Prostate gland (tissue), 2 donors: ENCODE measurements at regions of chr6 and their contacts with region 1.

Region 1: DNA sequence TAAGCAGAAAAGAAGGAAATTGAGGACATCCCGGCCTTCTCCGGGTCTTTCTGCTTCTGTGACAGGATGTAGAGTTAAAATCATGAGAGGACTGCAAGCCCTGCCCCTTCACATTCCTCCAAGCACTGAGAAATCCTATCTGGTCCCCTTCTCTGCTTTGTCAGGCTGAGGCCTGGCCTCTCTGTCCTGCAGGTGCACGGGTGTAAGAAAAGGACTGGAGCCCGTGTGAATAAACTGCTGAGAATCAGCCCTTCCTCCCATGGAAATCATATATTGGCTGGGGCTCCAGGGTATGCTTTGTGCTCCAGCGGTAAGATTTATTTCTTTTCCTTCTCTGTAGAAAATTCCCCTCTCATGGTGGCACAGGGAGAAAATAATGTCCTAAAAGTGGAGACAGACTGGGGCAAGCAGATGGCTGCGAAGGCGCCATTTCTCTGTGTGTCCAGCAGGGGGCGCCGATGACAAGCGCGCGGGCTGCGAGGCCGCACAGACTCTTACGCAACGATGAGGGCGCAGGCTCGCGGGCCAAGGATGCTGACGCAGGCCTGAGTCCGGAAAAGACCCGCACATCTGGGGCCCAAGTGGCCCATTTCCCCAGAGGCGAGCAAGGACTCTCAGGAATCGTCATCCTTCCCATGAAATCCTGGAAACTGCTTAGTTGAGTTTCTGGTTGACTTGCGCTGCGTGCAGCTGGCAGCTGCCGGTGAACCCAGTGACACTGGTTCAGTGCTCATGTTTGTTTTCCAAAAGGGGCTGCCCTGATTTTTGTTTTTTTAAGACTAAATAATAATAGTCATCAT is 258.6 kb downstream of the ADGB start:
- DNase-seq: peak; percentile 71
- H3K4me3 ChIP-seq: peak overlapping the region in 1 of 2 donors; percentile 14
- H3K27ac ChIP-seq: peak overlapping the region in 1 of 2 donors; percentile 18
- H3K4me1 ChIP-seq: no peaks in the 10 kb centered on the region
- H3K27me3 ChIP-seq: no peaks in the 10 kb centered on the region
- CTCF ChIP-seq: peak; percentile 95 to 99 (median 96)
- POLR2A ChIP-seq: no peak

Region 2: DNA sequence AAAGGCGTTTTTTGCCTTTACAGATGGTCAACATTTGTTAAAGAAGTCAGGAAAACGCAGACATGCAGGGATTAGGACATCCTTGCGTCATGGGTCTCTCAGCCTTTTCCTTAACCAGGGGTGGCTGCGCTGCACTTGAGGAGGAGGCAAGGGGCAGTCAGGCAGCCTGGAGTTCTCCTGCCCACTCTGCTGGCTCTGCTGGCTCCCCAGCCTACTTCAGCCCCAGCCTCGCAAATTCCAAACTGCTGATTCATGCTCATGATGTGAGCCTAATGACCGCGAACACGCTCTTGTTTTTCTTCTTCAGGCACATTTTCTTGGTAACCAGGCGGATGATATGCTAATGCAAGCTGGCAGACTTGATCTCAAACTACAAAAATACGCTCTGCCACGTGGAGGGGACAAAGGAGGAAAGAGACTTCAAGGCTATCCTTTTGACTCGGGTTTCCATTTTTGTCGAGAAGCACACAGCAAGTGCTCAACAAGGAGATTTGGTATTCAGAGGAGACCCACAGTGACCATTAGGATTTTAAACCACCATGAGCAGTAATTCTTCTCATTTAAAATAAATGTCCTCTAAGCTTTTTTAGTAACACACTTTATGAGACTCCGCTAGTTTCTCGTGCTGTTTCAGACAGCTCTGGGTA is 56.6 kb after region 1 on chr6:
- intact Hi-C with region 1: loop called (anchors 5 kb)
- DNase-seq: peak; percentile 24
- H3K4me3 ChIP-seq: no peak overlapping the region
- H3K27ac ChIP-seq: no peak overlapping the region
- H3K4me1 ChIP-seq: no peaks in the 10 kb centered on the region
- H3K27me3 ChIP-seq: no peaks in the 10 kb centered on the region
- CTCF ChIP-seq: no peak
- POLR2A ChIP-seq: no peak

Region 3: GRCh38 chr6:147202516-147203312 is 345.3 kb after region 1 on chr6:
- intact Hi-C with region 1: loop called (anchors 5 kb)
- DNase-seq: peak; percentile 94
- H3K4me3 ChIP-seq: peak overlapping the region; percentile 82 to 90
- H3K27ac ChIP-seq: peak overlapping the region; percentile 94 to 95
- H3K4me1 ChIP-seq: no peaks in the 10 kb centered on the region
- H3K27me3 ChIP-seq: no peaks in the 10 kb centered on the region
- CTCF ChIP-seq: no peak
- POLR2A ChIP-seq: peak; percentile 83

Region 4: GRCh38 chr6:147222160-147222838 is 364.9 kb after region 1 on chr6:
- intact Hi-C with region 1: loop called (anchors 5 kb)
- DNase-seq: no peak
- H3K4me3 ChIP-seq: no peak overlapping the region
- H3K27ac ChIP-seq: no peak overlapping the region
- H3K4me1 ChIP-seq: no peaks in the 10 kb centered on the region
- H3K27me3 ChIP-seq: no peaks in the 10 kb centered on the region
- CTCF ChIP-seq: peak in 3 of 4 experiments; percentile 13 to 44 (median 28)
- POLR2A ChIP-seq: no peak

Region 5: DNA sequence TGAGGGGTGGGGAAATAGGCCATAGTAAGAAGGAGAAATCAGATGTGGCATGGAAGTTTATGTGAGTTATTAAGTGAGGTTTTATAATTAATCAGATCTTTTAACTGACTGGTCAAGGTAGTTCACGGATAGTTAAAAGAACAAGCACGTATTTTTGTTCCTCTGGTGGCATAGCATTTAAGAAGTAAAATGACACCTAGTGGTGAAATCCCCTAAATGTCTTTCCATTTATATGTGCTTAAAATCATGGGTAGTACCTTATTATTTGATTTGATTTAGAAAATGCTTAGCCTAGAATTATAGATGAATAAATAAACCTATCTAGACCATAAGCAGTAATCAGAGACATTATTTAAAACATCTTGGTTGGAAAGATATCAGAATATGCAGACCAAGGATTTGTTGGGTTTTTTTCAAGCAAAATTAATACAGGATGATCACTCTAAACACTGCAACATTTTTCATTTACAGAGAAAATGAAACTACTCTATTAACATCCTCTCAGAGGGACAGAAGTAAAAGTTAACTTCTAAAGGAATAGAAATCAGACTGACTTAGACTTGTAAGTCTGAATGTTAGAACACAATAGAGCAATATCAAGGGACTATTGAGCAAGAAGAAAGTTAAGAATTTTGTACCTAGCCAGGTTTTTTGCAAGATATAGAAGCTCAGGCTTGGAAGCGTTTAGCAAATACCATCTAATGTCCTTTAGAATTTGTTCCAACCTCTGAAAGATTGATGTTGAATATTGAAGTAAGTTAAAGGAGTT is 427.9 kb after region 1 on chr6:
- intact Hi-C with region 1: loop called (anchors 2 kb)
- DNase-seq: no peak
- H3K4me3 ChIP-seq: no peak overlapping the region
- H3K27ac ChIP-seq: no peak overlapping the region
- H3K4me1 ChIP-seq: no peaks in the 10 kb centered on the region
- H3K27me3 ChIP-seq: no peaks in the 10 kb centered on the region
- CTCF ChIP-seq: peak in 3 of 4 experiments; percentile 56 to 66 (median 56)
- POLR2A ChIP-seq: no peak

Region 6: GRCh38 chr6:148423601-148424270 is 1566.4 kb after region 1 on chr6:
- intact Hi-C with region 1: no loop called
- DNase-seq: peak; percentile 19
- H3K4me3 ChIP-seq: no peak overlapping the region
- H3K27ac ChIP-seq: peak overlapping the region; percentile 26 to 28
- H3K4me1 ChIP-seq: no peaks in the 10 kb centered on the region
- H3K27me3 ChIP-seq: no peaks in the 10 kb centered on the region
- CTCF ChIP-seq: no peak
- POLR2A ChIP-seq: no peak